T-cell (primary cell): ENCODE measurements at regions of chr7 and their contacts with region 1.

Region 1: DNA sequence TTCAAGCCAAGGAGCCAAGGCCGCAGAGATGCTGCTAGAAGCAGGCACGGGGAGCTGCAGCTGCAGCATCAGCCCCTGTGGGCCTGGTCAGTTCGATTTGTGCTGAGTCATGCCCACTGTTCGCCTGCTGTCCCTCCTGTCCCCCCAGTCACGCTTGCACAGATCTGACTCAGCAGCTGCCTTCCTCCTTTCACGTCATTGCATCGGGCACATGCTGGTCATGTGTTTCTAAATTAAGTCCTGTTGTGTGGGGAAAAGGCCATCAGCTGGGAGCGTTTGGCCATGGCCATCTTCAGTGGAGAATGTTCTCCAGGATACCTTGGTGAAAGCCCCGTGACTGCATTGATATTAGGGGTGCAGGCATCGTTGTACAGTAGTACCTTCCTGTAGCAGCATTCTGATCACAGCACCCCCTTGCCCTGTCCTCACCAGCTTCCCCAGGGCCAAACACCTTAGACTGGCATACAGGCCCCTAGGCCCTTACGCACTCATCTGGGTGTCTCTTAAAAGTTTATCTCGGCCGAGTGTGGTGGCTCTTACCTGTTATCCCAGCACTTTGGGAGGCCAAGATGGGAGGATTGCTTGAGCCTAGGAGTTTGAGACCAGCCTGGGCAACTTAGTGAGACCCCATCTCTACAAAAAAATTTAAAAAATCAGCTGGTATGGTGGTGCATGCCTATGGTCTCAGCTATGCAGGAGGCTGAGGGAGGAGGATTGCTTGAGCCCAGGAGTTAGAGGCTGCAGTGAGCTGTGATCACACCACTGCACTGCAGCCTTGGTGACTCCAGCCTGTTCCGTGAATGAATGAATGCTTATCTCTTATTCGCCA is 23.2 kb downstream of the POR start:
- DNase-seq: no peak
- ATAC-seq: no peak
- H3K4me3 ChIP-seq: no peak overlapping the region
- H3K4me3 Mint-ChIP-seq: no peak overlapping the region
- H3K27ac ChIP-seq: no peak overlapping the region
- H3K27ac Mint-ChIP-seq: no peak overlapping the region
- H3K4me1 ChIP-seq: no peaks in the 10 kb centered on the region
- H3K4me1 Mint-ChIP-seq: peaks cover 0 to 7% (median 3%) of the 10 kb centered on the region in 3 donors
- H3K27me3 ChIP-seq: no peaks in the 10 kb centered on the region
- H3K27me3 Mint-ChIP-seq: no peaks in the 10 kb centered on the region

Region 2: DNA sequence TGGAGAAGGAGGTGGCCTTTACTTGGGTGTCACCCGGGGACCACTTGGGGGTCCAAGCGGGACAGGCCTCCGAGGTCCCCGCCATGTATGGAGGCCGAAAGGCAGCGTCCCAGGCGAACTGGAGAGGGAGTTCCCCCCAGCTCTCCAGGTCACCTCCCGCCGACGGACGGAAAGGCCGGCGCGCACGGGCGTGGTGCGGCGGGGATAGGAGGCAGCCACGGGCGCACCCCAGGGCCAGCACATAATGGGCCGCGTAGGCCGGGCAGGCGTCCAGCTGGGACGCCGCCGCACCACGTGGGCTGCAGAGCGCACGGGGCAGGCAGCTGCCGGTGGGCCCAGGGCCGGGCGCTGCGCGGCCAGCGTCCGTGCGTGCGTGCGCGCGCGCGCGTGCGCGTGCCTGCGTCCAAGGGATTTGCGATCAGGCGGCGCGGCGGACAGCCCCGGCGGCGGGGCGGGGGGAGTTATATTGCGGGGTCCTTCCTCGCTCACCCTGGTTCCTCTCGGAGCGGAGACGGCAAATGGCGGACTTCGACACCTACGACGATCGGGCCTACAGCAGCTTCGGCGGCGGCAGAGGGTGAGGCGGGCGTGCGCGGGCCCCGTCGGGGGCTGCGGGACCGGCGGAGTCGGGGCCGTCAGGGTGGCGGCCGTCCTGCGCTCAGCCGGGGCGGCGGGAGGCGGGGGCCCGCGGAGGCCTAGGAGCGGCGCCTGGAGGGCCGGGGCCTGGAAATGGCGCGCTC is 1764.1 kb before region 1 on chr7 and contains the start of gene EIF4H:
- CTCF ChIA-PET with region 1: no interaction called
- POLR2A ChIA-PET with region 1: no interaction called
- DNase-seq: peak; percentile 84 to 97 (median 93)
- ATAC-seq: peak; percentile 87 to 90 (median 88)
- H3K4me3 ChIP-seq: peak within 1 kb of the TSS; percentile 88 to 95
- H3K4me3 Mint-ChIP-seq: peak within 1 kb of the TSS; percentile 81 to 90 (median 85)
- H3K27ac ChIP-seq: peak within 1 kb of the TSS; percentile 86
- H3K27ac Mint-ChIP-seq: peak within 1 kb of the TSS; percentile 85 to 91
- H3K4me1 ChIP-seq: peaks cover 35 to 42% of the 10 kb centered on the region in 2 experiments
- H3K4me1 Mint-ChIP-seq: peaks cover 49 to 55% (median 54%) of the 10 kb centered on the region in 3 donors
- H3K27me3 ChIP-seq: no peaks in the 10 kb centered on the region
- H3K27me3 Mint-ChIP-seq: no peaks in the 10 kb centered on the region
- total RNA-seq, gene EIF4H: 174 to 258 (median 186) TPM

Region 3: DNA sequence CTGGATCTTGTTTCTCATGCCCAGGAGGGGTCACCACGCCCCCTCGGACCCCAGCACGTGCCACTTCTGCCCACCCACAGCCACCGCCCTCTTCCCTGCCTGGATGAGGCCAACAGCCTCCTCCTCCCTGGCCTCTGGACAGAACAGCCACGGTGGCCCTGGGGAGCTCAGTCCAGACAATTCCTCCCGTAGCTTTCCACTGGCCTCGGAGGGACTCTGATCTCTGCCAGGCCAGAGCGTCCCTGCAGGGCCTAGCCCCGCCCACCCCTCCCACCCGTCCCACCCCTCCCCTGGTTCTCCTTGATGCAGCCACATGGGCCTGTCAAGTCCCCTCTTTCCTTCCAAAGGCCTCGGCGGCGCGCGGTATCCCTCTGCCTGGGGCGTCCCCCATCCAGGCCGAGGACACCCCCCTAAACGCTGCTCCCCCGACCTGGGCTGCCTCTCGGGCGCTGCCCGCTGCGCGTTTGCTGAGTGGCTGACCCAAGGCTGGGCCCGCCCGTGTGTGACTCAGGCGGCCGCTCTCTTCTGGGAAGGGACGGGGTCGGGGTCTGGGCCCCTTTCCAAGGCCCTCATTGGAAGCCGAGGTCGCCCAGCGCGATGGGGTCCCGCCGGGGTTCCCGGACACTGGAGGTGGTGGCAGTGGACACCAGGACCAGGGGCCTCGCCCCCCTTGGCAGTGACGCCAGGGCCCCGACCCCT is 55.7 kb after region 1 on chr7:
- CTCF ChIA-PET with region 1: no interaction called
- POLR2A ChIA-PET with region 1: interaction called in 1 of 2 experiments, 11 read pairs
- DNase-seq: peak in 6 of 35 experiments; percentile 5 to 33 (median 14)
- ATAC-seq: peak in 3 of 4 experiments; percentile 5 to 28 (median 11)
- H3K4me3 ChIP-seq: peak overlapping the region; percentile 84 to 97
- H3K4me3 Mint-ChIP-seq: peak overlapping the region; percentile 67 to 78 (median 76)
- H3K27ac ChIP-seq: no peak overlapping the region
- H3K27ac Mint-ChIP-seq: peak overlapping the region in 1 of 2 donors; percentile 19
- H3K4me1 ChIP-seq: peaks cover 2 to 40% of the 10 kb centered on the region in 2 experiments
- H3K4me1 Mint-ChIP-seq: peaks cover 30 to 50% (median 46%) of the 10 kb centered on the region in 3 donors
- H3K27me3 ChIP-seq: no peaks in the 10 kb centered on the region
- H3K27me3 Mint-ChIP-seq: no peaks in the 10 kb centered on the region